ENCODE measurements at regions of chr3 and their contacts with region 1.

Region 1: DNA sequence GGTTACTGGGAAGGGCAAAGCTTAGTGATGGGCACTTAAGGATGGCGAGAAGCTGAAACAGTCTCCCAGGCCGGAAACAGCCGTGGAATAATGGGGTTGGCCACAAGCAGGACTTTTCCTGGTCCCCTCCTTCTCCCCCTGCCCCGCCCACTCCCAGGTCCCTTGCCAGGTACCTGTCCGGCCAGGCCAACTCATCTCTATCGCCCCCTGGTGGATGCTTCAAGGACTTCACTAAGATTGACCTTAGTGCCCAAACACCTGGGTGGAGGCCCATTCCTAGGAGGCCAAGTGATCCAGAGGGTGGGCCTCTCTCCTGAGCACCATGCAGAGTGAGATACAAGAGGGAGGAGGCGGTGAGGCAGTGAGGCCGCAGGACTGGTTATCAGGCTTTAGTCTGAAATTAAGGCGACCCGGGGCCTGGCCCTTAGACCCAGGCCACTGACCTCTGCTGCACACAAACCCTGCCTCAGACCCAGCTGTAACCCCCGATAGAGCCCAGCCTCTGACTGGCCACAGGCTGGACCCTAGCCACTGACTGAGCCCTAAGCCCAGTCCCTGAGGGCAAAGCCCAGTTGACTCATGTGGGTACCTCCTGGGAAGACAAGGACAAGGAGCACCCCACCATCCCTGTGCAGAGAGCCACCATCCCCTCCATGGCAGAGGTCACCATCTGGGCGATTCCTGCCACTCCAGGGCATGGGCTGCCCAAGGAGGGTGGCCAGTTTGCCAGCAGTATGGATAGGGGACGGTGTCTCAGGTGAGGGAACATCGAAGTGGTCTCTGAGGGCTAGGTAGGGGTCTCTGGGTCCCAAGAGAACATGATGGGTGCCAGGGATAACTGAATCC is 37.6 kb downstream of the VIPR1 start:
- DNase-seq: peak in 1 of 2 donors; percentile 34
- ATAC-seq: peak in 5 of 8 donors; percentile 36 to 63 (median 47)
- H3K4me3 ChIP-seq: no peak overlapping the region
- H3K27ac ChIP-seq: peak overlapping the region in 4 of 10 donors; percentile 10 to 30 (median 24)
- H3K4me1 ChIP-seq: peaks cover 0 to 29% (median 11%) of the 10 kb centered on the region in 9 donors
- H3K27me3 ChIP-seq: no peaks in the 10 kb centered on the region
- CTCF ChIP-seq: peak; percentile 63 to 80 (median 72)

Region 2: GRCh38 chr3:42229942-42230688 is 310.0 kb before region 1 on chr3:
- intact Hi-C with region 1: loop called in 5 of 10 experiments (anchors 2 to 10 kb)
- DNase-seq: no peak
- ATAC-seq: peak in 2 of 8 donors; percentile 49 to 53
- H3K4me3 ChIP-seq: no peak overlapping the region
- H3K27ac ChIP-seq: no peak overlapping the region
- H3K4me1 ChIP-seq: peaks cover 0 to 11% (median 7%) of the 10 kb centered on the region in 9 donors
- H3K27me3 ChIP-seq: peaks cover 0 to 8% (median 0%) of the 10 kb centered on the region in 7 donors
- CTCF ChIP-seq: peak in 8 of 9 donors; percentile 30 to 66 (median 59)

Region 3: GRCh38 chr3:42247576-42248027 is 292.5 kb before region 1 on chr3:
- intact Hi-C with region 1: loop called in 8 of 10 experiments (anchors 2 to 10 kb)
- DNase-seq: peak in 1 of 2 donors; percentile 57
- ATAC-seq: peak in 6 of 8 donors; percentile 29 to 72 (median 50)
- H3K4me3 ChIP-seq: no peak overlapping the region
- H3K27ac ChIP-seq: no peak overlapping the region
- H3K4me1 ChIP-seq: peaks cover 0 to 7% (median 0%) of the 10 kb centered on the region in 9 donors
- H3K27me3 ChIP-seq: peaks cover 0 to 33% (median 15%) of the 10 kb centered on the region in 7 donors
- CTCF ChIP-seq: peak; percentile 44 to 86 (median 76)

Region 4: GRCh38 chr3:42256135-42256819 is 283.8 kb before region 1 on chr3:
- intact Hi-C with region 1: loop called in 1 of 10 experiments (anchors 10 kb)
- DNase-seq: no peak
- ATAC-seq: no peak
- H3K4me3 ChIP-seq: no peak overlapping the region
- H3K27ac ChIP-seq: no peak overlapping the region
- H3K4me1 ChIP-seq: no peaks in the 10 kb centered on the region
- H3K27me3 ChIP-seq: peaks cover 0 to 58% (median 35%) of the 10 kb centered on the region in 7 donors
- CTCF ChIP-seq: no peak

Region 5: GRCh38 chr3:42502429-42503250 is 37.5 kb before region 1 on chr3 and contains the start of gene VIPR1:
- intact Hi-C with region 1: loop called in 8 of 10 experiments (anchors 2 to 5 kb)
- DNase-seq: peak; percentile 51 to 77
- ATAC-seq: peak; percentile 86 to 95 (median 90)
- H3K4me3 ChIP-seq: peak within 1 kb of the TSS in 9 of 10 donors; percentile 35 to 62 (median 52)
- H3K27ac ChIP-seq: peak within 1 kb of the TSS in 6 of 10 donors; percentile 10 to 53 (median 24)
- H3K4me1 ChIP-seq: peaks cover 8 to 30% (median 20%) of the 10 kb centered on the region in 9 donors
- H3K27me3 ChIP-seq: peaks cover 0 to 48% (median 38%) of the 10 kb centered on the region in 7 donors
- CTCF ChIP-seq: no peak
- total RNA-seq, gene VIPR1: 0.76 to 7.3 (median 1.5) TPM